BJ (cell line): ENCODE measurements at regions of chr7 and their contacts with region 1.

Region 1: DNA sequence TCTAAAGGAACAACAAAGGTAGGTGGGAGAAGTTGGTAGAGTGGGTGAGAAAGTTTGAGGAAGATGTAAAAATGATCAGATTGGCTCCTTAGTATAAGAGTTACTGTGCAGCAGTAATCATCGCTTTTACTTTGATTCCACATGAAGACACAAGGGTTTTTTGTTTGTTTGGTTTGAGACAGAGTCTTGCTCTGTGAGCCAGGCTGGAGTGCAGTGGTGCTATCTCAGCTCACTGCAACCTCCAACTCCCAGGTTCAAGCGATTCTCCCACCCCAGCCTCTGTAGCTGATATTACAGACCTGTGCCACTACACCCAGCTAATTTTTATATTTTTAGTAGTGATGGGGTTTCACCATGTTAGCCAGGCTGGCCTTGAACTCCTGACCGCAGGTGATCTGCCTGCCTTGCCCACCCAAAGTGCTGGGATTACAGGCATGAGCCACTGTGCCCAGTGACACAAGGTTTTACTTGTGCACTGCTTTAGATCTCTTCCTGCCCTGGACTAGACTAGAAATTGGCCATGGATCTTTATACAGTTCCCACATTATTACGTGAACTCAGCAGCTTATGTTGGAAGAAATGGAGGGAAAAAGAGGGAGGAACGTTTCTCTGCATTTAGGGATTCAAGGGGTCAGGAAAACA is 10.7 kb downstream of the LUC7L2 start:
- DNase-seq: no peak
- H3K4me3 ChIP-seq: no peak overlapping the region
- H3K27me3 ChIP-seq: no peaks in the 10 kb centered on the region
- CTCF ChIP-seq: no peak

Region 2: DNA sequence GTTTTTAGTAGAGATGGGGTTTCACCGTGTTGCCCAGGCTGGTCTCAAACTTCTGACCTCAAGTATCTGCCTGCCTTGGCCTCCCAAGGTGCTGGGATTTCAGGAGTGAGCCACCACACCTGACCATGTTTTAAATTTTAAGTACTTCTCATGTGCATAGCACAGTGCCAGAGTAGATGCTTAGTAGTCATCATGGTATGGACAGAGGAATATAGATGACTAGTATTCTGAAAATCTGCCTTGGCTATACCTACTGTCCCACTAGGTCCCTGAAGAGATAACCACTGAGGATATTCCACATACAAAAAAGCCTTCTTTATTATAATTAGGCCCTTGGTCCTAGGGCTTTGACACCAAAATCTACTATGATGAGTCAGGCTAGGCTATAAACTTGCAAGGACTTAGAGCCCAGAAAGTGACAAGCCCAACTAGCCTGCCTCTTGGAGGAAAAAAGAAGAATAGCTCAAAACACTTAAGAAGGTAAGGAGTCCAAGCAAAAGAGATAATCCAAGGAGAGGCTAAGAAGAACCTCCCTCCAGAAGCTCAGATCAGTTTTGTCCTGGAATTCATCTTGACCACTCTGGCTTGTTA is 23.3 kb after region 1 on chr7:
- CTCF ChIA-PET with region 1: no interaction called
- POLR2A ChIA-PET with region 1: interaction called, 30 read pairs
- DNase-seq: no peak
- H3K4me3 ChIP-seq: no peak overlapping the region
- H3K27me3 ChIP-seq: no peaks in the 10 kb centered on the region
- CTCF ChIP-seq: no peak